Heart right ventricle (tissue), 16 donors: ENCODE measurements at regions of chr10 and their contacts with region 1.

Region 1: GRCh38 chr10:125048101-125048864 is 106.4 kb downstream of the ZRANB1 start:
- DNase-seq: peak; percentile 86 to 89
- ATAC-seq: peak; percentile 87 to 96 (median 94)
- H3K4me3 ChIP-seq: no peak overlapping the region
- H3K27ac ChIP-seq: peak overlapping the region in 7 of 10 donors; percentile 8 to 62 (median 42)
- H3K4me1 ChIP-seq: peaks cover 22 to 98% (median 64%) of the 10 kb centered on the region in 9 donors
- H3K27me3 ChIP-seq: no peaks in the 10 kb centered on the region
- CTCF ChIP-seq: peak; percentile 92 to 99 (median 98)

Region 2: DNA sequence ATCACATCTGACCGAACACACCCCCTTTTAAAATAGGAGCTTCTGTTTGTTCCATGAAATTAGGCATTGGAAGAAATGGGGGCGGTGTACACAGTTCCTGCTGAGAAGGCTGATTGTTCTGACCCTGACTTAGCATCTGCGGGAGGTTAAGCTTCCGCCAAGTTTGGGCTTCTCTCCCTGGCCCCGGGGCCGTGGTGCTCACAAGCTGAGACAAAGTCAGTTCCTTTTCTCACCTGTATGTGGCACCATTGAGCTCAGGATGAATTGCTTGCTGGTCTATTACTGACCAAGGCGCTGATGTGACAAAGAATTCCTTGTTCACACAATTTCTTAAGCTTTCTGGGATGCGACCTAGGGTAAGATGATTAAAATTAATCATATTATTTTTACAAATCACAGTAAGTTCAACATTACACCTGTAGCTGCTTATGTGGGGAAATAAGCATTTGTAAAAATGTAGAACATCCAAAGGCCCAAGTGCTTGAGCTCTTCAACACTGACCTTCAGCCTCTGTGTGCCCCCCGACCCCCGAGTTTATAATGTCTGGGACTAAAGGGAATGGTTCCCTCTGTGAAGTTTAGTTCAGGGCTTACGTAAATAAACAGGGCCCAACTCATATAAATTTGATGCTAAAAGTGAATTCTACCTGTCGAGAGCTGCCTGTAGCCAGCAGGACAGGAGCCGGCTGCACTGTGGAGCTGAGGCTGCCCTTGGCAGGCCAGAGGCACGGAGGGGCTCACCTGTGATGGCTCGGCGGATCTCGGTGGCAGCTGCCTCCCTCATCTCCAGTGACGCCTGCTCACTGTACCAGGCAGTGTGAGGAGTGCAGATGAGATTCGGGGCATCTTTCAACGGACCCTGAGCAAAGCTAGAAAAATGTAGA is 55.6 kb before region 1 on chr10:
- intact Hi-C with region 1: loop called in 4 of 10 experiments (anchors 1 to 10 kb)
- DNase-seq: peak; percentile 38 to 90
- ATAC-seq: peak; percentile 39 to 90 (median 76)
- H3K4me3 ChIP-seq: no peak overlapping the region
- H3K27ac ChIP-seq: peak overlapping the region in 1 of 10 donors; percentile 4
- H3K4me1 ChIP-seq: peaks cover 0 to 29% (median 5%) of the 10 kb centered on the region in 9 donors
- H3K27me3 ChIP-seq: no peaks in the 10 kb centered on the region
- CTCF ChIP-seq: peak; percentile 59 to 87 (median 79)

Region 3: GRCh38 chr10:125011888-125012705 is 36.2 kb before region 1 on chr10:
- intact Hi-C with region 1: loop called in 3 of 10 experiments (anchors 5 to 10 kb)
- DNase-seq: peak in 1 of 2 donors; percentile 70
- ATAC-seq: peak; percentile 32 to 58 (median 49)
- H3K4me3 ChIP-seq: no peak overlapping the region
- H3K27ac ChIP-seq: peak overlapping the region; percentile 35 to 85 (median 68)
- H3K4me1 ChIP-seq: peaks cover 50 to 94% (median 74%) of the 10 kb centered on the region in 9 donors
- H3K27me3 ChIP-seq: no peaks in the 10 kb centered on the region
- CTCF ChIP-seq: no peak

Region 4: DNA sequence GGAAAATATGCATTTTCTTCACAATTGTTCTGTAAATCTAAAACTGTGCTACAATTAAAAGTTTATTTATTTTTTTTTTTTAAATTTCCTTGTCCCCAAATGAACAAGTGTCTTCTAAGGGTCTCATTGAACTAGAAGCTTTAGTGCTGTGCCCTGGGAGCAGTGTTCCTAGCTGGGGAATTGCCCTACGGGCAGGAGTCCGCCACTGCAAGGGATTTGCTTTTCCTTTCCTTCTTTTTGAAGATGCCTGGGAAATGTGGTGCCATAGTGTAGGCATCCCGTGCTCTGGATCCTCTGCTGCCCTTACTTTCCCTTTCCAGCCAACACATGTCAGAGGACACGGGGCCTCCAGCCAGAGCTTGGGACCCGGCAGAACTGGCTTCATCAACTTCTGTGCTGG is 289.2 kb after region 1 on chr10:
- intact Hi-C with region 1: loop called in 8 of 10 experiments (anchors 5 to 10 kb)
- DNase-seq: no peak
- ATAC-seq: no peak
- H3K4me3 ChIP-seq: no peak overlapping the region
- H3K27ac ChIP-seq: no peak overlapping the region
- H3K4me1 ChIP-seq: peaks cover 0 to 17% (median 0%) of the 10 kb centered on the region in 9 donors
- H3K27me3 ChIP-seq: no peaks in the 10 kb centered on the region
- CTCF ChIP-seq: no peak

Region 5: DNA sequence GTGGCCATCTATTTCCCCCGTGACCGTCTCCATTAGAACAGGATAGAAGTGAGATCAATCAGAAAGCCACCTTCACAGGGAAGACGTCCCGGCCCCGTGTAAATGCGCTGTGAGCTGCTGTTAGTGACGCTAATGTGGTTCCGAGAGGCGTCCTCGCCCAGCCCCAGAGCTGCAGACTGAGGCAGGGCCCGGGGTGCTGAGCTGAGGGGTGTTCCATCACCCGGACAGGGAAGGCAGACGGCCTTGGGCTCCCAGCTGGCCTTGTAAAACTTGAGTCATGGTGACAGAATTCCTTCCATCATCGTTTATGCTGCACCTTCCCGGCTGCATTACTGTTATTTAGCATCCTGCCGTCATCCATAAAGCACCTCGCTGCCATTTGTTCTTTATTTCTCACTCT is 307.4 kb after region 1 on chr10:
- intact Hi-C with region 1: loop called in 1 of 10 experiments (anchors 10 kb)
- DNase-seq: no peak
- ATAC-seq: no peak
- H3K4me3 ChIP-seq: no peak overlapping the region
- H3K27ac ChIP-seq: no peak overlapping the region
- H3K4me1 ChIP-seq: no peaks in the 10 kb centered on the region
- H3K27me3 ChIP-seq: peaks cover 0 to 4% (median 0%) of the 10 kb centered on the region in 7 donors
- CTCF ChIP-seq: no peak